HEK293T (cell line): ENCODE measurements at regions of chr6 and their contacts with region 1.

Region 1: GRCh38 chr6:118606268-118606667 is 45.1 kb downstream of the CEP85L start:
- DNase-seq: no peak

Region 2: GRCh38 chr6:118639054-118639964 is 33.0 kb after region 1 on chr6:
- CTCF ChIA-PET with region 1: interaction called, 11 read pairs
- POLR2A ChIA-PET with region 1: no interaction called
- DNase-seq: no peak